ENCODE measurements at regions of chr7 and their contacts with region 1.

Region 1: DNA sequence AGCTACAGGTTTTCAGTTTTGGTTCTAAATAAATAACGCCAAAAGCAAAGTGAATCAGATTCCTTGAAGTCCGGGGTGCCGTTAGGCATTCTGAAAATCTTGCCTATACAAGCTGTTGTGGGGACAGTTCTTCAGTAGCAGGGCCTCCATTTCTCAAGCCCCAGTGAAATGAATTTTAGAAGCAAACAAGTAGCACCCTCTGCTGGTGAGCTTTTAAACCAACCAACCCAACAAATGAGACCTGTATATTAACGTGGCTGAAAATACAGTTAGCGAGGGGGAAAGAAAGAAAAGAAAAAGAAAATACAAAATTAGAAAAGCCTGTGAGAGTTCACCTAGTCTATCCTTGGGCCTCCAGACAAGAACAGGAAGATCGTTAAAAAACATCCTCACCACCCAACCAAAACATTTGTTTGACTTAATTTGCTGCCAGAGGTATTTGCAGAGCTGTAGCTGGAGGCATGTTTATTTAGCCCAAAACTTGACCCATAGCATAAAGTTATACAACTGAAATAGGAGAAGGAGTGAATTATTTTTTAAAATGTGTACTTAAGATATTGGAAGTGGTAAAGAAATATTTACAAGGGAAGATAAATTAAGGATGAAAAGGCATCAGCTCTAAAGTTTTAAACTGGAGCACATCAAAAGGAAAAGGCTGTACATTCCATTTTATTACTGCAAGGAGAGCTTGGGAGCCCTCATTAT is 98.9 kb downstream of the DYNC1I1 start:
- DNase-seq: no peak
- ATAC-seq: peak; percentile 40 to 63
- H3K4me3 ChIP-seq: no peak overlapping the region
- H3K27ac ChIP-seq: no peak overlapping the region
- H3K4me1 ChIP-seq: peaks cover 4% of the 10 kb centered on the region
- H3K27me3 ChIP-seq: no peaks in the 10 kb centered on the region

Region 2: DNA sequence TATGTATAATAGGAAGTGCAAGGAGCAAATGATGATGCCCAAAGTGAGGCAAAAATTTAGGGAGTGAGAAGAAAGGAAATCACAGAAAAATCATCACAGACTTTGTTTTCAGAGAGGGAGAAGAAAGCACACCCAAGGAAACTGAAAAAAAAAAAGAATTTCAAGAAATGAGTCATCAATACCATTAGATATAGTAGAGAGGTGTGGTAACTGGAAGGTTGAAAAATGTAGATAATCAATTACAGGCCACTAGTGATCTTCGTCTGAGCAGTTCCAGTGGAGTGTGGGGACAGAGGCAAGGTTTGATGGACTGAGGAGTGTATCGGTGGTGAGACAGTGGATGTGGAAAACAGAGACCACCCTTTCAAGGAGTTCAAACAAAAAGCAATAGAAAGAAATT is 353.8 kb before region 1 on chr7:
- intact Hi-C with region 1: loop called in 1 of 4 experiments (anchors 5 kb)
- DNase-seq: no peak
- ATAC-seq: no peak
- H3K4me3 ChIP-seq: no peak overlapping the region
- H3K27ac ChIP-seq: no peak overlapping the region
- H3K4me1 ChIP-seq: no peaks in the 10 kb centered on the region
- H3K27me3 ChIP-seq: no peaks in the 10 kb centered on the region